Activated CD4-positive, alpha-beta T cell treated with anti-CD3 and anti-CD28 coated beads for 36 hours (primary cell): ENCODE measurements at regions of chr6 and their contacts with region 1.

Region 1: DNA sequence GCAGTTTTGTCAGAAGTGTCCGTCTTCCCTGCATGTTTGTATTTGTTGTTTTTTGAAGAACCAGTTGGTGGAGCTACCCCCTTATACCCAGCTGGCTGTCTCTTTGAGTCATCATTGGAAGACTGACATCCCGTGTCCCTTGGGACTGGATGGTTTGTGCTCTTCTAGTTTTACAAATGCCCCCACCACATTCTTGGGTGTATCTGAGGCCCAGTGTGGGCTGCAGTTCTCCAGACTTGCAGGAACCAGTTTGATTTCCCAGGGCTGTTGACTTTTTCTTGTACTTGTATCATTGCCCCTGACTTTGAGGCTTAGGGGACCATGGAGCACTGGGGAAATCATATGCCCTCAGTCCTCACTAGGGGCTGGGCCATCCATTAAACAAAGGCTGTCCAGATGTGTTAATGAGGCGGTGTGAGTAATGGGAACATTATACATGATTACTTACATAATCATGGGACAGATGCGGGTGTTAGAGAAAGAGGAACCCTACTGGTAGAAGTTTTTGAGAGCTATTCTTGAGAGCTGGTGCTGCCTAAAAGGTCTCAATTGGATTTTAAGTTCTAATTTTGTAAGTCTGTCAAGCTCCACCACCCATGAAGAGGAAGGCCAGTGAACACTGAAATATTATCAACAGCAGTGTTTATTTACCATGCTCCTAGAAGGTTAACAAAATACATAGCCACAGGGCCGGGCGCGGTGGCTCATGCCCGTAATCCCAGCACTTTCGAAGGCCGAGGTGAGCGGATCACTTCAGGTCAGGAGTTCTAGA is 8.4 kb downstream of the JARID2 start:
- DNase-seq: no peak
- ATAC-seq: no peak
- H3K4me3 Mint-ChIP-seq: peak overlapping the region; percentile 91
- H3K27ac Mint-ChIP-seq: peak overlapping the region; percentile 100
- H3K4me1 Mint-ChIP-seq: peaks cover 98% of the 10 kb centered on the region
- H3K27me3 Mint-ChIP-seq: no peaks in the 10 kb centered on the region

Region 2: GRCh38 chr6:14129575-14129974 is 1124.7 kb before region 1 on chr6:
- CTCF ChIA-PET with region 1: no interaction called
- POLR2A ChIA-PET with region 1: no interaction called
- intact Hi-C with region 1: loop called in 1 of 2 experiments (anchors 10 kb)
- DNase-seq: peak; percentile 51
- ATAC-seq: peak; percentile 69
- H3K4me3 Mint-ChIP-seq: no peak overlapping the region
- H3K27ac Mint-ChIP-seq: no peak overlapping the region
- H3K4me1 Mint-ChIP-seq: peaks cover 30% of the 10 kb centered on the region
- H3K27me3 Mint-ChIP-seq: no peaks in the 10 kb centered on the region

Region 3: GRCh38 chr6:15023448-15023847 is 230.8 kb before region 1 on chr6:
- CTCF ChIA-PET with region 1: no interaction called
- POLR2A ChIA-PET with region 1: no interaction called
- intact Hi-C with region 1: loop called in 1 of 2 experiments (anchors 1 kb)
- DNase-seq: peak; percentile 85
- ATAC-seq: peak; percentile 98
- H3K4me3 Mint-ChIP-seq: peak overlapping the region; percentile 37
- H3K27ac Mint-ChIP-seq: peak overlapping the region; percentile 89
- H3K4me1 Mint-ChIP-seq: peaks cover 22% of the 10 kb centered on the region
- H3K27me3 Mint-ChIP-seq: no peaks in the 10 kb centered on the region

Region 4: GRCh38 chr6:15285682-15286294 is 31.5 kb after region 1 on chr6:
- CTCF ChIA-PET with region 1: no interaction called
- POLR2A ChIA-PET with region 1: no interaction called
- intact Hi-C with region 1: no loop called
- DNase-seq: no peak
- ATAC-seq: no peak
- H3K4me3 Mint-ChIP-seq: no peak overlapping the region
- H3K27ac Mint-ChIP-seq: no peak overlapping the region
- H3K4me1 Mint-ChIP-seq: peaks cover 60% of the 10 kb centered on the region
- H3K27me3 Mint-ChIP-seq: no peaks in the 10 kb centered on the region

Region 5: GRCh38 chr6:15299430-15300131 is 45.3 kb after region 1 on chr6:
- CTCF ChIA-PET with region 1: interaction called, 4 read pairs
- POLR2A ChIA-PET with region 1: interaction called, 3 read pairs
- intact Hi-C with region 1: loop called (anchors 1 kb)
- DNase-seq: peak; percentile 48
- ATAC-seq: no peak
- H3K4me3 Mint-ChIP-seq: peak overlapping the region; percentile 18
- H3K27ac Mint-ChIP-seq: peak overlapping the region; percentile 69
- H3K4me1 Mint-ChIP-seq: peaks cover 83% of the 10 kb centered on the region
- H3K27me3 Mint-ChIP-seq: no peaks in the 10 kb centered on the region

Region 6: DNA sequence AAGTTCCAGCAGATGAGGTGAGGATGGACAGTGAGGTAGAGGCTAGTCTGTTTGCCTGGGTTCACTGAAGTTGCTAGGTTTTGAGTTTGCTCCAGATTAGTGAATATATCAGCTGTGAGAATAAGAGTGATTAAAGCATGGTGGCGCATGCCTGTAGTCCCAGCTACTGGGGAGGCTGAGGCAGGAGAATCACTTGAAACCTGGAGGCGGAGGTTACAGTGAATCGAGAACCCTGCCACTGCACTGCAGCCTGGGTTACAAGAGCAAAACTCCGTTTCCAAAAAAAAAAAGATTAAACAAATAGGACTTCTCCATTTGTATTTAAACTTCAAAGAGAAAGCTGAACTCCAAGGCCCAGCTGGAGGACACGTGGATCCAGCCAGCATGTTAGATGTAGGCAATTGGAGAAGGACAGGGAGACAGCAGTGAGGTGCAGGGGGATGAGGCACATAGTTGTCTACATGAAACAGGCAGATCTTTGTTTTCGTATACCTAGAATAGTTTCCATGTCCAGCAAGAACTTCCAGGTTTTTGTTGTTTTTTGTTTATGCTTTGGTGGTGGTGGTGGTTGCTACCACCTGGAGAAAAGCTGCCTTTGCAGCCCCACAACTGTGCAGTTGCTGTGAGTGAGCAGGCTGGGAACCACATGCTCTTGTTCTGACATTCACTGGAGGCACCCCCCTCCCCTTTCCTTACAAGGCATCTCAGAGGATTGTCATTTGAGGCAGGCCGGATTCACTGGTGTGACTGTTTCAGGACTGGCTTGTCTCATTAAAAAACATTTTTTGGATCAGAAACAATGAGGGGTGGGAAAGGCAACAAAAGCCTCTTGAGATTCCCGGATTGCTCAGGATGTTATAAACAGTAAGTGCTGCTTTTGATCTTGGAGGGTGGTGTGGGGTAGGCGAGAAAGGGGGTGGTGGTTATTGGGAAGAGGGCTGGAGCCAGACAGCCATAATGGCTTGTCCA is 64.0 kb after region 1 on chr6:
- CTCF ChIA-PET with region 1: no interaction called
- POLR2A ChIA-PET with region 1: no interaction called
- intact Hi-C with region 1: loop called in 1 of 2 experiments (anchors 5 kb)
- DNase-seq: peak; percentile 58
- ATAC-seq: peak; percentile 56
- H3K4me3 Mint-ChIP-seq: peak overlapping the region; percentile 54
- H3K27ac Mint-ChIP-seq: peak overlapping the region; percentile 82
- H3K4me1 Mint-ChIP-seq: peaks cover 96% of the 10 kb centered on the region
- H3K27me3 Mint-ChIP-seq: no peaks in the 10 kb centered on the region

Region 7: DNA sequence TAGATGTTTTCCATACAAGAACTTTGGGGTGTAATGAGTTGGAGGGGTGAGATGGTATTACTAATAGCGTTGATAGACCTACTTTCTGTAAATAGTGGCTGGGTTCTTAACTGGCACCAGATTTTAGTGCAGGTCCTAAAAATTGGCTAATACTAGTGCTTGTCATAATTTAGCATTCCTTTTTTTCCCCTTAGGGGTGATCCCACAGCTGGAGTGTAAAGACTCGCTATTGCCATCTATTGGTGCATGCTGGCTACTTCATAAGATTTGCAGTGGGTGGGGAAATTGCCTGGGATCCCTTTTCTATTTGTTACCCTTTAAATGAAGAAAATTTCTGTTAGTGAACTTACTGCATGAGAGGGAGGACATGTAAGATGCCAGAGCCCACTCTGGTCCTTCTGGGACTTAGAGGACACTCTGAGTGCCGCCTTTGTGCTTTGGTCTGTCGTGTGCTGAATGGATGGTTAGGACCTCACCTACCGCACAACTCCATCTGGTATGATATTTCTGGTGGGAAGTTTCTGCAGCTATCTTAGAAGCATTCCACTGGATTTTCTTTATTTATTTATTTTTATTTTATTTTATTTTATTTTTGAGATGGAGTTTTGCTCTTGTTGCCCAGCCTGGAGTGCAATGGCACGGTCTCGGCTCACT is 187.1 kb after region 1 on chr6:
- CTCF ChIA-PET with region 1: no interaction called
- POLR2A ChIA-PET with region 1: interaction called, 4 read pairs
- intact Hi-C with region 1: loop called (anchors 2 to 5 kb)
- DNase-seq: peak; percentile 49
- ATAC-seq: no peak
- H3K4me3 Mint-ChIP-seq: no peak overlapping the region
- H3K27ac Mint-ChIP-seq: no peak overlapping the region
- H3K4me1 Mint-ChIP-seq: peaks cover 73% of the 10 kb centered on the region
- H3K27me3 Mint-ChIP-seq: no peaks in the 10 kb centered on the region